SK-N-SH (cell line): ENCODE measurements at regions of chr5 and their contacts with region 1.

Region 1: DNA sequence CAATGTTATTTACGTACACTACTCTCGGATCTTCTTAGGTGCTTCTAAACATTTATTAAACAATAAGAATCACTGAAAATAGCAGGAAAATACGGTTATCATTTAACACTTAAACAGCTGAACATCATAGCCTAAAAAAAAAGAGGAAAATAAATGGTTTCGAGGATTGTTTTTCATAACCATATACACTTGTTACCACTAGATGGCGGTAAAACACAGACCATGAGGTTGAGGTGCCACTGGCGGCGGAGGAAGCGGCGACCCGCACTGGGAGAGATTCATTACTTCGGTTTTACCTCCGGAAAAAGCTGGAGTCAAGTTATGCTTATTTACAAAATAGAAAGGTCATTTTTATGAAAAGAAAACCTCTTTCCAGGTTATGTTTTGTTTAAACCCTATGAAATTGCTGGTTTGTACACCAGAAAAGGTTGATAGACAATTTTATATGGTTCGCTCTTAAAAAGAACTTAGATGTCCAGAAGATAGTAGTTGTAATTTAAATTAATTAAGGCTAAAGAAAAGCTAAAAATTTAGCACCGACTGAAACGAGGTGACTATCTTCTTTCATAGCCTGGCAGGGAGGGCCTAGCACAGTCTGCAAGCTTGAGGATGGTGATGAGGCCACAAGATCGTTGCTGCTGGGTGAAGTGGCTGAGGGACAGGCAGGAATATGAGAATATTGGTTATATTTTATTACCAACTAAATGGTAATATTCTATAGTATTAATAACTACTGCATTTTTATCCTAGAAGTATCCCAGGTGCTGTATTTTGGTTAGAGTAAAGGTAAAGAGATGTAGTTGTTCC is 605.7 kb downstream of the RAB3C start:
- DNase-seq: peak; percentile 52
- H3K4me3 ChIP-seq: peak overlapping the region in 1 of 2 experiments; percentile 29; a peak in 3 of 4 replicates
- H3K27ac ChIP-seq: peak overlapping the region in 1 of 2 experiments; percentile 50; a peak in 1 of 4 replicates
- H3K4me1 ChIP-seq: peaks cover 0 to 4% of the 10 kb centered on the region in 2 experiments; a peak in 2 of 4 replicates
- H3K27me3 ChIP-seq: no peaks in the 10 kb centered on the region
- CTCF ChIP-seq: peak; percentile 81
- EP300 ChIP-seq: no peak
- RAD21 ChIP-seq: peak; percentile 97

Region 2: DNA sequence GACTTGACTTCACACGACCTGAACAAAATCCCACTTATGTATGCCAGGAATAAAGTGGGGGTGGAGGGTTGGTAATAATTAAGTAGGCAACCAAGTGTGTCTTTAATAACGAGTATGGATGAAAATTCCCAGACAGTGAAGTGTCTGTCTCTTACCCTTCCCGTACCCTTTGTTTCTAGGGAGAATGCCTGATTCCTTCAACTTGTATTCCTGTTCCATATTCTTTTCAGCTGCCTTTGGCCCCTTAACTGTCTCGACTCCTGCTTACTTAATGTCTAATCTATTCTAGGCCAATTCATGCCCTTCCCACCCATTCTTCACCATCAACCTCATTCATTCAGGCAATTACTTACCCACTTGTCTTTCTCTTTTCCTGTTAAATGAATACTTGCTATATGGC is 225.3 kb before region 1 on chr5:
- CTCF ChIA-PET with region 1: no interaction called
- POLR2A ChIA-PET with region 1: no interaction called
- DNase-seq: no peak
- H3K4me3 ChIP-seq: no peak overlapping the region
- H3K27ac ChIP-seq: no peak overlapping the region
- H3K4me1 ChIP-seq: no peaks in the 10 kb centered on the region
- H3K27me3 ChIP-seq: no peaks in the 10 kb centered on the region
- CTCF ChIP-seq: no peak
- EP300 ChIP-seq: no peak
- RAD21 ChIP-seq: no peak

Region 3: DNA sequence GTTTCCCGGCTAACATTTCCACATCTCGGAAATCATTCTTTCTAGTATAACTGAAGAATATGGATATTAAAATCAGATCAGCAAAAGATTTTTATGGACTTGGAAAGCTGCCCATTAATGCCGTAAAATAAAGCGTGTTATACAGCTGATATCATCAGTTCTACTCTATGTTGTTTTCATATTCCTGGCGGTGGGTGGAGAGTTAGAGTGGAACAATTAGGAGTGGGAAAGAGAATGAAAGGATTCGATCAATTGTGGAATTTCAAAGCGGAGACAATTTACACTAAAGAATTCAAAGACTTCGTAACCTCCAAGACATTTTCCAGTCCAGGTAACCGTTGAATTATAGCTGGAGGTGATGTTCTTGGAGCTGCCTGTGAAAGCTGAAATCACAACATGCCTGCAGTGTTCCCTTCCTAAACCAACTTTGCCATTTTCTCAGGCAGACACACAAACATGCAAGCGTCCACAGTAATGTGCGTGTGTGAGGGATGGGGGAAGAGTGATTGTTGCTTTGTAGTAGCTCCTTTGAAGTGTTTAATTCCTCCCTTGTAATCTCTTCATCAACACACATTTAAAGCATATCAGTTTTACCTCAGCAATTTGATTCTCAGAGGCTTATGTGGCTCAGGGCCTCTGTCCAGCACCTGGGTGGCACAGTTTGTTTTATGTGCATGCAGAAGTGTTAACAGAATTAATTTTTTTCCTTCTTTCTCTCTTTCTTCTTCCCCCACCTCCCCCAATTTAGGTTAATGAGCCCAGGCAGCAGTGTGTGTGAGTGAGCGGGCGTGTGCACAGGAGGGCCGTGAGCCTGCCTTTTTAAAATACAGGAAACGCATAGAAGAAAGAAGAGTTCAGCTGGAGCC is 61.7 kb before region 1 on chr5:
- CTCF ChIA-PET with region 1: interaction called, 10 read pairs
- POLR2A ChIA-PET with region 1: no interaction called
- DNase-seq: no peak
- H3K4me3 ChIP-seq: peak overlapping the region; percentile 42 to 46
- H3K27ac ChIP-seq: peak overlapping the region; percentile 91 to 99
- H3K4me1 ChIP-seq: peaks cover 17 to 33% of the 10 kb centered on the region in 2 experiments; a peak in 3 of 4 replicates
- H3K27me3 ChIP-seq: no peaks in the 10 kb centered on the region
- CTCF ChIP-seq: no peak
- EP300 ChIP-seq: no peak; a peak in 1 of 4 replicates
- RAD21 ChIP-seq: no peak

Region 4: GRCh38 chr5:59218424-59219045 is 29.9 kb after region 1 on chr5:
- CTCF ChIA-PET with region 1: interaction called, 50 read pairs
- POLR2A ChIA-PET with region 1: no interaction called
- DNase-seq: peak; percentile 13
- H3K4me3 ChIP-seq: no peak overlapping the region
- H3K27ac ChIP-seq: no peak overlapping the region
- H3K4me1 ChIP-seq: peaks cover 0 to 5% of the 10 kb centered on the region in 2 experiments; a peak in 2 of 4 replicates
- H3K27me3 ChIP-seq: no peaks in the 10 kb centered on the region
- CTCF ChIP-seq: peak; percentile 66
- EP300 ChIP-seq: no peak
- RAD21 ChIP-seq: peak; percentile 46

Region 5: GRCh38 chr5:59380350-59380951 is 191.8 kb after region 1 on chr5:
- CTCF ChIA-PET with region 1: interaction called, 137 read pairs
- POLR2A ChIA-PET with region 1: interaction called, 7 read pairs
- DNase-seq: peak; percentile 28
- H3K4me3 ChIP-seq: no peak overlapping the region
- H3K27ac ChIP-seq: no peak overlapping the region
- H3K4me1 ChIP-seq: no peaks in the 10 kb centered on the region; a peak in 1 of 4 replicates
- H3K27me3 ChIP-seq: no peaks in the 10 kb centered on the region
- CTCF ChIP-seq: peak; percentile 74
- EP300 ChIP-seq: no peak
- RAD21 ChIP-seq: peak; percentile 79

Region 6: DNA sequence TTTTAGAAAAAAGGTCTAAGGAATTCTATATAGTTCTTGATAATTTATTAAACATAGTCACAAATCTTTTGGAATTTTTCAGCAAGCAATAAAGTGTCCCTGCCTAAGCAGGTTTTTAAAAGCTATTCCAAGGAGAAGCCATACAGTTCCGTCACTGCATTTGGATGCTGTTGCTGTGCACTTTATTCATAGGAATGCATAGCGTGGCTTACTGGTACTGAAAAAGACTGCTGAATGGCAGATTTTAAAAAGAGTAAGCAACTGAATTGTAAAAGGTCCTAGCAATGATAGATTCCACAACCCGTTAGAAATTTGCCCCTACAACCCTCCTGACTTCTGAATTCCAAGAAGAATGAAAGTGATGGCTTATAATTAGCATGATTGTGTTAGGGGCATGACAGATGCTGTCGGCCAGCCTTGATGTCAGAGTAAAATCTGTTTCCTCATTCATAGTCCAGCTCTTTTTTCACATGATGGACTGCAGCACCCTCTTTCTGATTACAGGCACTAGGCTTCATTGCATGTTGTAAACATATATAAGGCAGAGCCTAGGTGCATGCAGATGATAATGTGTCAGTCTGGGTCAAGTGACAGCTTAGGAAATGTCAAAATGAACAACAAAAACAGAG is 477.9 kb after region 1 on chr5:
- CTCF ChIA-PET with region 1: interaction called, 16 read pairs
- POLR2A ChIA-PET with region 1: no interaction called
- DNase-seq: no peak
- H3K4me3 ChIP-seq: no peak overlapping the region
- H3K27ac ChIP-seq: peak overlapping the region in 1 of 2 experiments; percentile 29; a peak in 1 of 4 replicates
- H3K4me1 ChIP-seq: peaks cover 0 to 18% of the 10 kb centered on the region in 2 experiments; a peak in 2 of 4 replicates
- H3K27me3 ChIP-seq: no peaks in the 10 kb centered on the region
- CTCF ChIP-seq: no peak
- EP300 ChIP-seq: no peak
- RAD21 ChIP-seq: peak; percentile 46

Region 7: DNA sequence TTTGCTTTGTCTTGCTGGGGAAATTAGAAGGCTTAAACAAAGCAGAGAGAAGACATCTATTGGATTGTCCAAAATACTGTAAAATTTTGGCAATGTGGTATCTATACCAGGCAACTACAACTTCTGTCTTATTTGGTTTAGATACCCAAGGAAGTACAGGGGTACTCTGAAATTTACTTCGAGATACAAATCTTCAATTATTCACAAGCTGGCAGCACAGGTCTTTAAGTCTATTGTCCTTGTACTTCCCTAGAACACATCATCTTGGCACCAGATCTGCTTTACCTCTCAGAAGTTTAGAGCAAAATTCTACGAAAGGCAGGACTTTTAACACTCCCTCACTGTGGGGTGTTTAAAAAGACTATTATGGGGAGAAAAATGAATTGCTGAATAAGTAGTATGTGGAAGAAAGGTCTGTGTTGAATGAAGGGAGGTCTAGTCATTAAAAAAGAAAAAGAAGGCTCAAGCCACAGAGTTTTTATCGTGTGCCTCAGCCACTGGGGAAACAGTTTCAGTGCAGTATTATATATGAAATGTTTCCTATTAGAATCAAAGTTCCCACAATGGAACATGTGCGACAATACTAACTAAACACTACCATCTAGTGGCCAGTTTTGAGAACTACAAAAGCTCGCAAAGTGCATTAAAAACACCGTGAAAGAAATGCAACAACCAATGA is 611.2 kb after region 1 on chr5:
- CTCF ChIA-PET with region 1: interaction called, 16 read pairs
- POLR2A ChIA-PET with region 1: no interaction called
- DNase-seq: peak; percentile 37
- H3K4me3 ChIP-seq: no peak overlapping the region; a peak in 1 of 4 replicates
- H3K27ac ChIP-seq: peak overlapping the region; percentile 46 to 74; a peak in 3 of 4 replicates
- H3K4me1 ChIP-seq: peaks cover 10 to 15% of the 10 kb centered on the region in 2 experiments
- H3K27me3 ChIP-seq: no peaks in the 10 kb centered on the region
- CTCF ChIP-seq: peak; percentile 81
- EP300 ChIP-seq: no peak
- RAD21 ChIP-seq: peak; percentile 97